ENCODE measurements at regions of chr4 and their contacts with region 1.

Region 1: DNA sequence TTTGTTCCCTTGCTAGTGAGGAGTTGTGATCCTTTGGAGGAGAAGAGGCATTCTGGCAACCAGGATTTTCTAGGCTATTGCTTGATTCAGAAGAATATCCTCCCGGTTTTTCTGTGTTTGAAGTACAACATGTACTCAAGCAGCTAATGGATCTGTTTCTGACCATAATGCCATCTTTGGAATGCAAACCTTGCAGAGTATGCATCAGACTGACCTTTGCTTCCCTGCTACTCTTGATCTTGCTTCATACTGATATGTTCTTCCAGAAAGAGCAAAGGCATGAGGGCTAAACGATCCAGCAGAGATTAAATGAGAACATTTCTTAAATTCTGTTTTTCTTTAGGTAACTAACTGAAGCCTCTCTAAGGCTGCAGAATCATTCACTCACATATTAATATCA is 265.4 kb upstream of the SLC7A11 start:
- DNase-seq: no peak
- H3K4me3 ChIP-seq: no peak overlapping the region
- H3K27ac ChIP-seq: no peak overlapping the region
- H3K4me1 ChIP-seq: no peaks in the 10 kb centered on the region
- H3K27me3 ChIP-seq: no peaks in the 10 kb centered on the region
- CTCF ChIP-seq: no peak
- POLR2A ChIP-seq: no peak

Region 2: DNA sequence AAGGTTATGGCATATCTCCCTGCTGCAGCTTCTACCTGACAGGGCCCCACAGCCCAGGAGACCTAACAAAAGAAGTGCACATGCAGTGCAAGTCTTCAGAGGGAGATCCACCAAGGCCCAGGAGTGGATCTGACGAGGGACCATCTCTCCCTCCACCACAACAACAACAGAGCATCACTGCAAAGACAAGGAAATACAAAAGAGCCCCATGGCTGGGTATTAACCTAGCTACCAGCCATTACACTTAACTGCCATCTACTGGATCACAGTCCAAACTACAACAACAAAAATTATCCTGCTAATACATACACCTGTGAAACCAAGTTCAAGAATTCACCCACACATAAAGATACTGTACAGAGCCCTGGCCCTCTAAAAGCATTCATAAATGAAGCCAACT is 14.8 kb after region 1 on chr4:
- intact Hi-C with region 1: loop called (anchors 1 kb)
- DNase-seq: no peak
- H3K4me3 ChIP-seq: no peak overlapping the region
- H3K27ac ChIP-seq: no peak overlapping the region
- H3K4me1 ChIP-seq: no peaks in the 10 kb centered on the region
- H3K27me3 ChIP-seq: no peaks in the 10 kb centered on the region
- CTCF ChIP-seq: no peak
- POLR2A ChIP-seq: no peak

Region 3: DNA sequence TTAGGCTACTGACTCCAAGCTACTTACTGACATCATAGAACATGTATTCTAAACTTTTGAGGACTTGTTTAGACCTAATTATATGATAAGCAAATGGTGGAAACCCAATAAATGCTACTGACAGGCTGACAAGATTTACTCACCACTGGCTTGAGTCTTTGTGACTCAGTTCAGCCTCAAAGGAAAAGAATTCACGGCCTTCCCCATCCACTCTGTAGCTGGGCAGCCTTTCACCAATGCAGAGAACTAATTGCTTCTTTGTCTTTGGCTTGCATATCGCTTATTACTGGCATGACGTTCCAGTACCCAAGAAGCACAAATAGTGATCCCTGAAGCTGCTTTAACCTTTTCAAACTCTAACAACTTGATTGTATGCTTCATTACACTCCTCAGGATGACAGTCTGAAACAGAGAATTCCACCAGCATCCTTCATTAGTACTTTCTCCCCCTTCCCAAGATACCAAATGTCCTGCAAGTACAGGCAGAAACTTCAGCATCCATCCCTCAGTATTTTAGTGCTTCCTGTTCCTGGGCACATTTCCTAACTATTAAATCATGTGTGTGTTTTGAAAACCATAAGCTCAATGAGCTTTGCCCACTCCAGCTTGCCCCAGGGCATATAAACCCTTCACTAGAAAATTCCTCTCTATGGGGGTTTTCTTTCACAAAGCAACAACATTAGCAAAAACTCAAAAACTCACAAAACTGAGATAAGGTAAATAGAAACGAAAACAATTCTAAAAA is 32.7 kb after region 1 on chr4:
- intact Hi-C with region 1: no loop called
- DNase-seq: no peak
- H3K4me3 ChIP-seq: no peak overlapping the region
- H3K27ac ChIP-seq: no peak overlapping the region
- H3K4me1 ChIP-seq: no peaks in the 10 kb centered on the region
- H3K27me3 ChIP-seq: no peaks in the 10 kb centered on the region
- CTCF ChIP-seq: no peak
- POLR2A ChIP-seq: no peak

Region 4: GRCh38 chr4:139749338-139749737 is 1241.8 kb after region 1 on chr4:
- intact Hi-C with region 1: no loop called
- DNase-seq: no peak
- H3K4me3 ChIP-seq: no peak overlapping the region
- H3K27ac ChIP-seq: no peak overlapping the region
- H3K4me1 ChIP-seq: no peaks in the 10 kb centered on the region
- H3K27me3 ChIP-seq: no peaks in the 10 kb centered on the region
- CTCF ChIP-seq: no peak
- POLR2A ChIP-seq: no peak

Measured in breast epithelium (tissue), 4 donors.